ENCODE measurements at regions of chr6 and their contacts with region 1.

Region 1: GRCh38 chr6:36615018-36615761 is 21.0 kb downstream of the SRSF3 start:
- DNase-seq: peak; percentile 64
- H3K4me3 Mint-ChIP-seq: no peak overlapping the region
- H3K27ac Mint-ChIP-seq: peak overlapping the region; percentile 79
- H3K4me1 Mint-ChIP-seq: peaks cover 20% of the 10 kb centered on the region
- H3K27me3 Mint-ChIP-seq: no peaks in the 10 kb centered on the region

Region 2: GRCh38 chr6:36706339-36706738 is 91.1 kb after region 1 on chr6:
- CTCF ChIA-PET with region 1: interaction called, 15 read pairs
- intact Hi-C with region 1: no loop called
- DNase-seq: no peak
- H3K4me3 Mint-ChIP-seq: no peak overlapping the region
- H3K27ac Mint-ChIP-seq: no peak overlapping the region
- H3K4me1 Mint-ChIP-seq: no peaks in the 10 kb centered on the region
- H3K27me3 Mint-ChIP-seq: peaks cover 2% of the 10 kb centered on the region

Region 3: DNA sequence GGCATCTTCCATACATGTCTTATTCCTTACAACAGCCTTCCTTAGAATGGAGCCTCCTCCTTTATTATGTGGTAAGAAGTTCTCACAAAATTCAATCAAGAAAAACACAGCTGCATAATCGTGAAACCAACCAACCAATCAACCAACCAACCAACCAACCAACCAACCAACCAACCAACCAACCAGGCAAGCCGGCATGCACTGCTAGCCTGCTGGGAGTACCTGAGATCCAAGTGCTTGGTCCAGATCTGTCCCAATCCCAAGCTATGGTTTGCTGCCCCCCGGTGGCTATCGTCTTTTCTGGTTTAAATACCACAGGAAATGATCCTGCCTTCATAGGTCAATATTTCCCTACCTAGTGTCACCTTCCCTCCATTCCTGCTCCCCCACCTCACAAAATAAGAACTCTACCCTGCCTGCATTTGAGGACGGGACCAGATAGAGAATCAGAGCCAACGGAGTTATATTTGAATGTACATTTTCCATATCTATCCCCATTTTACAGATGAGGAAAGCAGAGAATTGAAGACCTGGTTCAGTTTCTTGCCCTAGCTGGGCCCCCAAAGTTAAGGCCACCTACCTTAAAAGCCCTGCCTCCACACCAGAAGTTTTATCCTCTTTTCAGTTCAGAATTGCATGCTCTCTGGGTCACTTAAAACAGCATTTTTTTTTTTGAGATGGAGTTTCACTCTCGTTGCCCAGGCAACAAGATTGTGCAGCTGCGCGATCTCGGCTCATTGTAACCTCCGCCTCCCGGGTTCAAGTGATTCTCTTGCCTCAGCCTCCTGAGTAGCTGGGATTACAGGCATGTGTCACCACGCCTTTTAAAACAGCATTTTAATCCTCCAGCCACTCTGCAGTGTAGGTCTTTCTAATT is 109.6 kb after region 1 on chr6:
- CTCF ChIA-PET with region 1: interaction called, 18 read pairs
- intact Hi-C with region 1: loop called (anchors 1 kb)
- DNase-seq: peak; percentile 88
- H3K4me3 Mint-ChIP-seq: no peak overlapping the region
- H3K27ac Mint-ChIP-seq: no peak overlapping the region
- H3K4me1 Mint-ChIP-seq: peaks cover 13% of the 10 kb centered on the region
- H3K27me3 Mint-ChIP-seq: no peaks in the 10 kb centered on the region

Region 4: GRCh38 chr6:36752886-36753506 is 137.8 kb after region 1 on chr6:
- CTCF ChIA-PET with region 1: interaction called, 25 read pairs
- intact Hi-C with region 1: loop called (anchors 1 kb)
- DNase-seq: peak; percentile 45
- H3K4me3 Mint-ChIP-seq: no peak overlapping the region
- H3K27ac Mint-ChIP-seq: peak overlapping the region; percentile 90
- H3K4me1 Mint-ChIP-seq: peaks cover 63% of the 10 kb centered on the region
- H3K27me3 Mint-ChIP-seq: no peaks in the 10 kb centered on the region

Region 5: GRCh38 chr6:36780442-36781177 is 165.4 kb after region 1 on chr6:
- CTCF ChIA-PET with region 1: interaction called, 23 read pairs
- intact Hi-C with region 1: loop called (anchors 2 kb)
- DNase-seq: no peak
- H3K4me3 Mint-ChIP-seq: no peak overlapping the region
- H3K27ac Mint-ChIP-seq: no peak overlapping the region
- H3K4me1 Mint-ChIP-seq: no peaks in the 10 kb centered on the region
- H3K27me3 Mint-ChIP-seq: no peaks in the 10 kb centered on the region

Region 6: GRCh38 chr6:36851149-36851614 is 236.0 kb after region 1 on chr6:
- CTCF ChIA-PET with region 1: no interaction called
- intact Hi-C with region 1: loop called (anchors 5 kb)
- DNase-seq: peak; percentile 64
- H3K4me3 Mint-ChIP-seq: no peak overlapping the region
- H3K27ac Mint-ChIP-seq: no peak overlapping the region
- H3K4me1 Mint-ChIP-seq: no peaks in the 10 kb centered on the region
- H3K27me3 Mint-ChIP-seq: no peaks in the 10 kb centered on the region